Breast epithelium (tissue), 4 donors: ENCODE measurements at regions of chr5 and their contacts with region 1.

Region 1: GRCh38 chr5:131279204-131279603 is 15.4 kb downstream of the CDC42SE2 start:
- DNase-seq: no peak
- H3K4me3 ChIP-seq: no peak overlapping the region
- H3K27ac ChIP-seq: no peak overlapping the region
- H3K4me1 ChIP-seq: no peaks in the 10 kb centered on the region
- H3K27me3 ChIP-seq: no peaks in the 10 kb centered on the region
- CTCF ChIP-seq: no peak
- POLR2A ChIP-seq: no peak

Region 2: GRCh38 chr5:131289738-131290137 is 10.5 kb after region 1 on chr5:
- intact Hi-C with region 1: loop called (anchors 1 kb)
- DNase-seq: no peak
- H3K4me3 ChIP-seq: no peak overlapping the region
- H3K27ac ChIP-seq: no peak overlapping the region
- H3K4me1 ChIP-seq: no peaks in the 10 kb centered on the region
- H3K27me3 ChIP-seq: no peaks in the 10 kb centered on the region
- CTCF ChIP-seq: no peak
- POLR2A ChIP-seq: no peak